Uterus (tissue), 4 donors: ENCODE measurements at regions of chr21 and their contacts with region 1.

Region 1: GRCh38 chr21:29360799-29361765 is 62.4 kb downstream of the BACH1 start:
- DNase-seq: no peak
- H3K4me3 ChIP-seq: no peak overlapping the region
- H3K27ac ChIP-seq: no peak overlapping the region
- H3K4me1 ChIP-seq: no peaks in the 10 kb centered on the region
- H3K27me3 ChIP-seq: no peaks in the 10 kb centered on the region
- CTCF ChIP-seq: no peak
- POLR2A ChIP-seq: no peak

Region 2: DNA sequence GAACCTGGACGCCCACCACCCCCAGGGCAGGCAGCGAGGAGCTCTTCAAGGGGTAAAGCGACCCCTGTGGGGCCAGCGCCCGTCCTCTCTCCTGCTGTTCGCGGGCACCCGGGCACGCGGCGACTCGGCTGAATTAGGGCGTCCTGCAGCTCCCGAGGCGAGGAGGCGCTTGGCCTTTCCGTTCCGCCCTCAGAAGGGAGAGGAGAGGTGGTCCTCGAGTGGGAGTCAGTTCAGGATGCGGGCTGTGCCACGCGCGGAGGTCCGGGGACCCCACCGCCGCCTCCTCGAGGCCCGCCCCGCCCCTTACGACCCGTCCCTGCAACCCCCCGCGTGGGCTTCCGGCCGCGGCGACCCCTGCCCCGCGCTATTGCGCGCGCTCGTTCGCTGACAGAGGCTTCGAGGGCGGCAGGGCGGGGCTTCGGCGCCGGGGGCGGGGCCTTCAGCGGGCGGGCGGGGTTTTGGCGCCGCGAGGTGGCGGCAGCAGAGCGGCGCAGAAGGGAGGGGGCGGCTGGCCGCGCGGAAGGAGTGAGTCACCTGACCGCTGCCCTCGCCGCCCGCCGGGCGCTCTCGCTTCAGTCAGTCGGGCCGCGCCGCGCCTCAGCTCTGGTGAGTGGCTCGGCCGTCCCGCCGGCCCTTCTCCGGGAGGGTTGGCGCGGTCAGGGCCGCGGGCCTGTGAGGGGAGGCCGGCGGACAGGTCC is 62.6 kb before region 1 on chr21 and contains the start of gene BACH1:
- intact Hi-C with region 1: loop called (anchors 10 kb)
- DNase-seq: peak; percentile 85 to 90
- H3K4me3 ChIP-seq: peak within 1 kb of the TSS; percentile 69 to 71
- H3K27ac ChIP-seq: peak within 1 kb of the TSS; percentile 92 to 93
- H3K4me1 ChIP-seq: peaks cover 0 to 4% of the 10 kb centered on the region in 2 donors
- H3K27me3 ChIP-seq: no peaks in the 10 kb centered on the region
- CTCF ChIP-seq: peak in 3 of 4 experiments; percentile 43 to 58 (median 47)
- POLR2A ChIP-seq: peak; percentile 85 to 94
- total RNA-seq, gene BACH1: 52.9 to 107 (median 79.1) TPM